ENCODE measurements at regions of chr11 and their contacts with region 1.

Region 1: DNA sequence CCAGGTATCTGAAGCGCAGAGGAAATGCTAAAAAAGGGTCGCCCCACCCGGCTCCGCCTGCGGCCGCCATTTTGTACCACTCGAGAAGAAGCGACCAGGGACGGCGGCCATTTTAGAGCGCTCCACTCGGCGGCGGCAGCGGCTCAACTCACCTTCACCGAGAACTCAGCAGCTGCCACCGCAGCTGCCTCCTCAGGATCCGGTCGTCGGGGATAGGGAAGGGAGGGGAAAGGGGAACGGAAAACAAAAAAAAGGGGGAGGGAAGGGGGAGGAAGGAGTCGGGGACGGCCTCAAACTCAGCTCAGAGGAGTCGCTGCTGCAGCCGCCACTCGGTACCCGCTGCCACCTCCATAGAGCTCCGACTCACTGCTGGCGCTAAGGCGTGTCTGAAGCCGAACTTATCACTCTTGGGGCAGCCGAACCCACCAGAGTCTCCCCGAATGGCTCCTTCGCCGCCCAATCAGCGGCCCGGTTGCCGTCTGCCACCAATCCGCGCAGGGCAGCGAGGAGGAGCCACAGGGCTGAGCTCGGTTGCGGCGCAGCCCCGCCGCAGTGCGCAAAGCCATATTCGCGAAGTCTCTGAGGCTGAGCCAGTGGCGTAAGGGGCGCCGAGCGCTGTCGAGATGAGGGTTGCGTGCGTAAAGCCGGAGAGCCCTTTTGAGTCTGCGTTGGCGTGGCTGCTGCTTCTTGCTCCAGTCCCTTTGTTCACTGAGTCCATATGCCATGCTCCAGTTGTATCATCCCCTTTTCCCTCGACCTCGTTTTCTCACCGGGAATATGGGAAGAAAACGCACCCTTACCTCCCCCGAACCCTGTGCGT is at the start of gene EIF4G2:
- DNase-seq: peak; percentile 98 to 99 (median 99)
- H3K4me3 ChIP-seq: peak within 1 kb of the TSS; percentile 86 to 96 (median 88)
- H3K27ac ChIP-seq: peak within 1 kb of the TSS; percentile 88 to 99 (median 97)
- H3K4me1 ChIP-seq: peaks cover 8 to 38% of the 10 kb centered on the region in 2 donors
- H3K27me3 ChIP-seq: no peaks in the 10 kb centered on the region
- CTCF ChIP-seq: peak in 1 of 6 experiments; percentile 10
- POLR2A ChIP-seq: peak; percentile 99 to 100
- total RNA-seq, gene EIF4G2: 392 to 1,049 (median 549) TPM

Region 2: DNA sequence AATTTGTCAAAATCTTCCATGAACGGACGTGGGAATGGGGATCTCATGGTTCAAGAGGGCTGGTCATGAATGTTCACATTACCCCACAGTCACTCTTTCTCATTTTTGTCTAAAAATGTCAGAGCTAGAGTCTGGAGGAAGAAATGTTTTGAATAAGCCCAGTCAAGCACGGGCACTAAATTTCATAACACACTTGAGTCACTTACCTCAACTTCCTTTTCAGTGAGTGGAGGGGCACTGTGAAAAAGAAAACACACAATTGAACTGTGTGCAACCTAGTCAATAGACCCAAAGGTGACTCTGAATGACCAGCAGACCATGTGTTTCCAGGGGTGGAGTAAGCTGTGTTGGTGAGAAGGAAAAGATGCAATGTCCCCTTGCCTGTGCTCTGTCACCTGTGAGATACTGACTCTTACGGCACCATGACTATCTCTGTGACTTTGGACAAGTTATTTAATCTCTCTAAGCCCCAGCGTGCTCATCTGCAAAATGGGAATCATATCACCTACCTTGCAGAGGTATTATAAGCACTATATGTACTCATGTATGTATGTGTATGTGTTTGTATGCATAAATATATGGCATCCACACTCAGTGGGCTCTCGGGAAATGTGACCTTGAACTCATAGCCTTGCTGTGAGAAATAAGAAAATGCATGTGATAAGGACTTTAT is 202.1 kb before region 1 on chr11:
- intact Hi-C with region 1: no loop called
- DNase-seq: peak in 1 of 7 donors; percentile 4
- H3K4me3 ChIP-seq: no peak overlapping the region
- H3K27ac ChIP-seq: peak overlapping the region; percentile 25 to 96 (median 91)
- H3K4me1 ChIP-seq: peaks cover 43 to 75% of the 10 kb centered on the region in 2 donors
- H3K27me3 ChIP-seq: no peaks in the 10 kb centered on the region
- CTCF ChIP-seq: no peak
- POLR2A ChIP-seq: no peak

Region 3: GRCh38 chr11:10857709-10858438 is 49.1 kb after region 1 on chr11 and contains the start of gene ZBED5:
- intact Hi-C with region 1: loop called in 1 of 2 experiments (anchors 5 kb)
- DNase-seq: peak; percentile 96 to 99 (median 97)
- H3K4me3 ChIP-seq: peak within 1 kb of the TSS; percentile 68 to 99 (median 94)
- H3K27ac ChIP-seq: peak within 1 kb of the TSS; percentile 88 to 97 (median 95)
- H3K4me1 ChIP-seq: peaks cover 27 to 48% of the 10 kb centered on the region in 2 donors
- H3K27me3 ChIP-seq: no peaks in the 10 kb centered on the region
- CTCF ChIP-seq: peak in 4 of 6 experiments; percentile 8 to 39 (median 24)
- POLR2A ChIP-seq: peak; percentile 91 to 98
- total RNA-seq, gene ZBED5: 12.3 to 36.8 (median 26.2) TPM

Region 4: DNA sequence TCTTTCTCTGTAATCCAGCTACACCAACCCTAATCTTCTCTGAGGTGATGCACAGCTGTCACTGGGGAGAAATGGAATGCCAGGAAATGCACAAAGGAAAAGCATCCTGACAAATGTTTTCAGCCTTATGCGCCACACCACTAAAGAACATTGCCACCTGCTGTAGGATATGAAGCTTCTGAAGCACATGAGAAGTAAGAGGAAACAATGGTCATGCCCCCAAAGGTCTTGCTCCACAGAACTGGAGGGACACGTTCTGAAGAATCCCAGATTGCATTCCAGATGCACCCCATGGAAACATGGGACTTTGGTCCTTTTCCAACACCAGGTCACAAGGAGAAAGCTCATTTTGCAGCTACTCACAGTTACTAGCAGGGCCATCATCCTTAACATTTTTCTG is 97.8 kb after region 1 on chr11:
- intact Hi-C with region 1: no loop called
- DNase-seq: no peak
- H3K4me3 ChIP-seq: no peak overlapping the region
- H3K27ac ChIP-seq: no peak overlapping the region
- H3K4me1 ChIP-seq: no peaks in the 10 kb centered on the region
- H3K27me3 ChIP-seq: no peaks in the 10 kb centered on the region
- CTCF ChIP-seq: no peak
- POLR2A ChIP-seq: no peak